PC-9 (cell line): ENCODE measurements at regions of chr22 and their contacts with region 1.

Region 1: GRCh38 chr22:45163451-45164269 is at the start of gene NUP50:
- DNase-seq: peak; percentile 90 to 98
- H3K4me3 ChIP-seq: peak within 1 kb of the TSS; percentile 88
- H3K27ac ChIP-seq: peak within 1 kb of the TSS; percentile 84
- H3K4me1 ChIP-seq: peaks cover 28% of the 10 kb centered on the region
- H3K27me3 ChIP-seq: no peaks in the 10 kb centered on the region
- CTCF ChIP-seq: no peak
- total RNA-seq, gene NUP50: 84.0 and 118 TPM in 2 replicates

Region 2: GRCh38 chr22:44664149-44664548 is 499.5 kb before region 1 on chr22:
- CTCF ChIA-PET with region 1: no interaction called
- POLR2A ChIA-PET with region 1: no interaction called
- intact Hi-C with region 1: no loop called
- DNase-seq: no peak
- H3K4me3 ChIP-seq: no peak overlapping the region
- H3K27ac ChIP-seq: no peak overlapping the region
- H3K4me1 ChIP-seq: no peaks in the 10 kb centered on the region
- H3K27me3 ChIP-seq: peaks cover 68% of the 10 kb centered on the region
- CTCF ChIP-seq: no peak

Region 3: DNA sequence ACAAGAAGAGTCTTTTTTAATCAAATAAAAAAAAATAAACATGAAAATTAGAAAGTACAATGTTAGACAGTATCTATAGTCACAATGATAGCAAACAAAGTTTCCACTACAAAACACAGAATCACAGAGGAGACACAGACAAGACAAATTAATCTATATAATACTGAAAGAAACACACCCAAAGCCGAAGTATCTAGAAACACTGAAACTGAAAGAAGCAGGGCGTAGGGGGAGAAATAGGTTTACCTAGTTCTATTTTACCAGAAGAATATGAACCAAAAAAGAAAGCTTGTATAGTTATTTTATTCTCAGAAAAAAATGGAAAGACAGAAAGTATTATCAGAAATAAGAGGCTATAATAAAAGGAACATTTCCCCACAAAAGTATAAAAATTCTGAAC is 27.1 kb before region 1 on chr22:
- CTCF ChIA-PET with region 1: no interaction called
- POLR2A ChIA-PET with region 1: no interaction called
- intact Hi-C with region 1: loop called (anchors 1 kb)
- DNase-seq: no peak
- H3K4me3 ChIP-seq: no peak overlapping the region
- H3K27ac ChIP-seq: no peak overlapping the region
- H3K4me1 ChIP-seq: no peaks in the 10 kb centered on the region
- H3K27me3 ChIP-seq: no peaks in the 10 kb centered on the region
- CTCF ChIP-seq: no peak

Region 4: GRCh38 chr22:45240810-45241631 is 77.4 kb after region 1 on chr22 and contains the start of gene KIAA0930:
- CTCF ChIA-PET with region 1: interaction called, 3 read pairs
- POLR2A ChIA-PET with region 1: no interaction called
- intact Hi-C with region 1: loop called (anchors 10 kb)
- DNase-seq: peak; percentile 39 to 56
- H3K4me3 ChIP-seq: peak within 1 kb of the TSS; percentile 90
- H3K27ac ChIP-seq: no peak within 1 kb of the TSS
- H3K4me1 ChIP-seq: peaks cover 12% of the 10 kb centered on the region
- H3K27me3 ChIP-seq: no peaks in the 10 kb centered on the region
- CTCF ChIP-seq: no peak
- total RNA-seq, gene KIAA0930: 55.5 and 62.6 TPM in 2 replicates

Region 5: GRCh38 chr22:46287873-46288751 is 1124.5 kb after region 1 on chr22:
- CTCF ChIA-PET with region 1: no interaction called
- POLR2A ChIA-PET with region 1: interaction called, 22 read pairs
- intact Hi-C with region 1: no loop called
- DNase-seq: peak in 1 of 2 experiments; percentile 28
- H3K4me3 ChIP-seq: no peak overlapping the region
- H3K27ac ChIP-seq: no peak overlapping the region
- H3K4me1 ChIP-seq: no peaks in the 10 kb centered on the region
- H3K27me3 ChIP-seq: no peaks in the 10 kb centered on the region
- CTCF ChIP-seq: no peak